ENCODE measurements at regions of chr11 and their contacts with region 1.

Region 1: GRCh38 chr11:33700425-33701271 is at the start of gene C11orf91:
- DNase-seq: peak; percentile 94
- H3K4me3 Mint-ChIP-seq: peak within 1 kb of the TSS; percentile 79
- H3K27ac Mint-ChIP-seq: peak within 1 kb of the TSS; percentile 92
- H3K4me1 Mint-ChIP-seq: peaks cover 45% of the 10 kb centered on the region
- H3K27me3 Mint-ChIP-seq: no peaks in the 10 kb centered on the region
- CTCF ChIP-seq: no peak
- total RNA-seq, gene C11orf91: 2.8 and 2.9 TPM in 2 replicates

Region 2: DNA sequence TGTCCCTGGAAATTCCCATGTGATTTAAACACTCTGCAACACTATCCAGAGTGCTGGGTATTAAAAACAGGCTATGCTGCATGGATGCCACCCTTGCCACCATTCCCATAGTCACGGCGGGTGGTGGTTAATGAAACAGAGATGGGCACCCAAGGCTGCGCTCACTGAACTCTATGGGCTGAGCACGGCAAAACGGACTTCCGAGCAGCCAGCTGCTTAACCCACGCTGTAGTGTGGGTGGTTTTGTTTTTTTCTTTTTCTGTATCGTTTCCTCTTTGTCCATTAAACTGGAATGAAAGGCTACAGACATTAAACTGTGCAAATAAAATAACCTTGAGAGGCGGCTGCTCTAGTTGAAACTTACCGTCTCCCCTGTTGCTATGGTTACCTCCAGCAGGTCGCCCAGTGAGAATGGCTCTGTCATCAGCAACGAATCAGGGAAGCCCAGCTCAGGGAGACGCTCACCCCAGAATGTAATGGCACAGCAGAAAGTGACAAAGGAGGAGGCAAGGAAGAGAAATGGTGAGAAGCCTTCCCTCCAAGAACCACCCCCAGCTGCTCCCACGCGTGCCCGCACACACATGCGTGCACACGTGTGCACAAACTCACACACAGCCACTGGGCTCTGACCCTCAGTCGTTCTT is 102.1 kb before region 1 on chr11:
- CTCF ChIA-PET with region 1: no interaction called
- POLR2A ChIA-PET with region 1: no interaction called
- intact Hi-C with region 1: no loop called
- DNase-seq: no peak
- H3K4me3 Mint-ChIP-seq: no peak overlapping the region
- H3K27ac Mint-ChIP-seq: no peak overlapping the region
- H3K4me1 Mint-ChIP-seq: no peaks in the 10 kb centered on the region
- H3K27me3 Mint-ChIP-seq: peaks cover 43% of the 10 kb centered on the region
- CTCF ChIP-seq: no peak

Region 3: DNA sequence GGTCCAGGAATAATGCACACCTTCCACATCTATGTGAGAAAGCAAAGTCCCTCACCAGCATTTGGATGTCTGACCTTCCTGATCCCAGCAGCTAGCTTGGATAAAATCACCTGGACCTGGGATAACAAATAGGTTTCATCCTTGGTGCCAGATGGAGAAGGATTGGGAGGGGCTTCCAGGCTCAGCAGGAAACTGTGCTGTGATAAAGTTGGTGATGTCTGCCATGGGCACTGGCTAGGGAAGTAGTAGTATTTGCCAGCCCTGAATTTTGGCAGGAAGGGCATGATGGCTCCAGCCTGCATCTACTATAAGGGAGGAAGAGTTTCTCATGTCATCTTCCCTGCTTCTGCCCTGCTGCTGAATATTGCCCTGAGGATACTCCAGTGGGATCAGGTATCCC is 37.5 kb before region 1 on chr11:
- CTCF ChIA-PET with region 1: no interaction called
- POLR2A ChIA-PET with region 1: no interaction called
- intact Hi-C with region 1: no loop called
- DNase-seq: no peak
- H3K4me3 Mint-ChIP-seq: no peak overlapping the region
- H3K27ac Mint-ChIP-seq: no peak overlapping the region
- H3K4me1 Mint-ChIP-seq: no peaks in the 10 kb centered on the region
- H3K27me3 Mint-ChIP-seq: no peaks in the 10 kb centered on the region
- CTCF ChIP-seq: no peak

Region 4: DNA sequence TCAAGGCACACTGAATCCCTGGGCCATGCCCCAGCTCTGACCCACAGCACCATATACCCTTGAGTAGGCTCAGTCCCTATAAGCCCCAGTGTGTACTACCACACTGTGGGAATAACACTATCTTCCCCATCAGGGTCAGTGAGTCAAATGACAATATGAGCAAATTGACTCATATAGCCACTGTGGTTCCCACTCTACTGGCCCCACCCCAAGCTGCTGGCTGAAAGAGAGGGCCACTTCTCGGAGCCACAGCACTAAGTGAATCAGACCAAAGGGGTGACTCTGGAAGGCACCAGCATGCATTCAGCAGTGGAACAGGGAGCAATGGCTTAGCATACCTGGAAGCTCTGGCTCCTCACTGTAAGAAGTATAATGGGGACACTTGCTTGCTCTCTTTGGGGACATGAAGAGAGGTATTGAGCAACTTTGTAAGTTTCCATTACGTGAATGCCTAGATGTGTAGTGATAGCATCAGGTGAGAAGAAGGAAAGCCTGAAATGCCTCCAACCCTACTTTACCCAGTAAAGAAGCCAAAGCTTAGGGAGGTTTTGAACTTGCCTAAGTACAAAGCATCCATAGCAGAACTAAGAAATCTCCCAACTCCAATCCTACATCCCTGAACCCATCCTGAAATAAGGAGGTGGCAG is 22.1 kb after region 1 on chr11:
- CTCF ChIA-PET with region 1: interaction called, 37 read pairs
- POLR2A ChIA-PET with region 1: interaction called, 11 read pairs
- intact Hi-C with region 1: no loop called
- DNase-seq: peak; percentile 83
- H3K4me3 Mint-ChIP-seq: peak overlapping the region; percentile 63
- H3K27ac Mint-ChIP-seq: peak overlapping the region; percentile 93
- H3K4me1 Mint-ChIP-seq: peaks cover 68% of the 10 kb centered on the region
- H3K27me3 Mint-ChIP-seq: no peaks in the 10 kb centered on the region
- CTCF ChIP-seq: no peak